Heart right ventricle (tissue), 16 donors: ENCODE measurements at regions of chr14 and their contacts with region 1.

Region 1: DNA sequence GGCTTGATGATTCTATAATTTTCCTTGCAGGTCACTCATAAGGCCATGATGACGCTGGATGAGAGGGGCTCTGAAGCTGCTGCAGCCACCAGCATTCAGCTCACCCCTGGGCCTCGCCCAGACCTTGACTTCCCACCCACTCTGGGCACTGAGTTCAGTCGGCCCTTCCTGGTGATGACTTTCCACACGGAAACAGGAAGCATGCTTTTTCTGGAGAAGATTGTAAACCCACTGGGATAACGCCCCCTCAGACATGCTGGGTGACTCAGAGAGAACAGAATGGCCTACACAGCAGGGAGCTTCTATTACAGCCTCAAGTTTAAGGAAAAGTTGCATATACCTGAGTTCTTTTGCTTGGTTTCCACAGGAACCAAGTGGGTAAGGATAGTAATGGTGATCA is 34.3 kb downstream of the SERPINA3 start:
- DNase-seq: no peak
- ATAC-seq: peak in 5 of 8 donors; percentile 46 to 75 (median 57)
- H3K4me3 ChIP-seq: no peak overlapping the region
- H3K27ac ChIP-seq: no peak overlapping the region
- H3K4me1 ChIP-seq: peaks cover 0 to 6% (median 0%) of the 10 kb centered on the region in 9 donors
- H3K27me3 ChIP-seq: peaks cover 0 to 14% (median 3%) of the 10 kb centered on the region in 7 donors
- CTCF ChIP-seq: no peak

Region 2: GRCh38 chr14:94787098-94787497 is 140.6 kb after region 1 on chr14:
- intact Hi-C with region 1: no loop called
- DNase-seq: no peak
- ATAC-seq: peak in 2 of 8 donors; percentile 29 to 38
- H3K4me3 ChIP-seq: no peak overlapping the region
- H3K27ac ChIP-seq: no peak overlapping the region
- H3K4me1 ChIP-seq: no peaks in the 10 kb centered on the region
- H3K27me3 ChIP-seq: peaks cover 0 to 68% (median 54%) of the 10 kb centered on the region in 7 donors
- CTCF ChIP-seq: no peak

Region 3: DNA sequence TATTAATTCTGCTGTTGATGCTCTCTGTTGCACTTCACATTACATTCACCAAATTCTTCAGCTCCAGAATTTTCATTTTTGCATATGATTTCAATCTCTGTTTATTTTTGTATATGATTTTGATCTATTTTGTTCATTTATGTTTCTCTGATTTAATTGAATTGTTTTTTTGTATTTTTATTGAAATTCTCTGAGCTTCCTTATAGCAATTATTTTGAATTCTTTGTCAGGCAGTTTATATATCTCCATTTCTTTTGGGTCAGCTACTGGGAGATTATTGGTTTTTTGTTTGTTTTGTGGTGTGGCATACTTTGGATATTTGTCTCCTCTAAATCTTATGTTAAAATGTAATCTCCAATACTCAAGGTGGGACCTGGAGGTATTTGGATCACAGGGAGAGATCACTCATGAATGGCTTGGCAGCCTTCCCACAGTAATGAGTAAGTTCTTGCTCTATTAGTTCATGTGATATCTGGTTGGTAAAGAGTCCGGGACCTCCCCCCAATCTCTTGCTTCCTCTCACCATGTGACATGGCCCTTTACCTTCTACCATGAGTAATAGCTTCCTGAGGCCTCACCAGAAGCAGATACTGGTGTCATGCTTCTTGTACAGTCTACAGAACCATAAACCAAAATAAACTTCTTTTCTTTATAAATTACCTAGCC is 1076.2 kb after region 1 on chr14:
- intact Hi-C with region 1: loop called in 1 of 10 experiments (anchors 5 kb)
- DNase-seq: no peak
- ATAC-seq: no peak
- H3K4me3 ChIP-seq: no peak overlapping the region
- H3K27ac ChIP-seq: no peak overlapping the region
- H3K4me1 ChIP-seq: no peaks in the 10 kb centered on the region
- H3K27me3 ChIP-seq: peaks cover 0 to 25% (median 11%) of the 10 kb centered on the region in 7 donors
- CTCF ChIP-seq: no peak